Common myeloid progenitor, CD34-positive (primary cell): ENCODE measurements at regions of chr10 and their contacts with region 1.

Region 1: DNA sequence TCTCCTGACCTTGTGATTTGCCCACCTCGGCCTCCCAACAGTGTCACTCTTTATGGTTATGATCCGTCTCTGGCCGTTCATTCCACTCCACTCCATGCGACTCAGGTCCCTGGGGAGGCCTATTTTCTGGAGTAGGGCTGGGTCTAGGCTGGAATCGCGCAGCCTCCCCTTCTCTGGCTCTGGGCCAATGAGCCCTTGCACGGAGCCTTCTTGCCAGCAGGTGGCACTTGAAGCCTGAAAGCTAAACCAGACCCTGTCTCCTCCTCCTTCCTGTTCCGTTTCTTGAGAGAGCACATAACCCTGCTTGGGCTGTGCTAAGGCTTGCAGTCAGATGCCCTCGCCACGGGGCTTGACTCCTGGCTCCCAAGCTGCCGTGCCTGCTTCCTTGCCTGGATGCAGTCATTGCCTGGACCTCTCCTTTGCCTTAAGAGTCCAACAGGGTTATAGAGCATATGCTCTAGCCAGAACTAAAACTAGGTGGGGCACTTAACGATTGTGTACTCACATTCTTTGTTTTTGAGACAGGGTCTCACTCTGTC is 9.6 kb upstream of the DNAJB12 start:
- DNase-seq: peak; percentile 88 to 94 (median 92)
- H3K4me3 ChIP-seq: peak overlapping the region in 2 of 7 experiments; percentile 55 to 61
- H3K27ac ChIP-seq: no peak overlapping the region
- H3K4me1 ChIP-seq: peaks cover 0 to 9% (median 7%) of the 10 kb centered on the region in 4 experiments
- H3K27me3 ChIP-seq: no peaks in the 10 kb centered on the region

Region 2: GRCh38 chr10:72319416-72320254 is 44.7 kb before region 1 on chr10:
- CTCF ChIA-PET with region 1: no interaction called
- POLR2A ChIA-PET with region 1: no interaction called
- DNase-seq: peak; percentile 88 to 94 (median 93)
- H3K4me3 ChIP-seq: peak overlapping the region in 5 of 7 experiments; percentile 40 to 71 (median 50)
- H3K27ac ChIP-seq: peak overlapping the region; percentile 78 to 94
- H3K4me1 ChIP-seq: peaks cover 22 to 94% (median 92%) of the 10 kb centered on the region in 4 experiments
- H3K27me3 ChIP-seq: no peaks in the 10 kb centered on the region

Region 3: DNA sequence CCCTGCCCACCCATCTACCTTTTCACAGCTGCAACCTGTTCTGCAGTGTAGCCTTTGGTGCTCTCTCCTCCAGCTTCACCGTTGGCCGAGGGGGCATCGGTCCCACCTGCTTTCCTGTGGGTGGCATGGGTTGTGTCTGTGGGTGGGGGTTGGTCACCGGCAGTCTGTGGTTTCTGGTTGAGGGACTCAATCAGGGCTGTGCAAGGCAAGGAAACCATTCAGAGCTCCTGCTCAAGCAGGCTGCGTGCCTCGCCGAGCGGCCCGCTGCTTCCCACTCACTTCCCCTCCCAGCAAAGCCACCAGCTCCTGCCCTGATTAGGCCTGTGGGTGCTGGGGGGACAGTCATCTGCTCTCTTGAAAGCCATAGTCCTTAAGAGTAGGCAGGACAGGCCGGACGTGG is 19.4 kb before region 1 on chr10:
- CTCF ChIA-PET with region 1: interaction called, 13 read pairs
- POLR2A ChIA-PET with region 1: no interaction called
- DNase-seq: peak in 1 of 3 donors; percentile 43
- H3K4me3 ChIP-seq: no peak overlapping the region
- H3K27ac ChIP-seq: no peak overlapping the region
- H3K4me1 ChIP-seq: peaks cover 0 to 18% (median 11%) of the 10 kb centered on the region in 4 experiments
- H3K27me3 ChIP-seq: no peaks in the 10 kb centered on the region

Region 4: GRCh38 chr10:72375585-72375984 is 11.3 kb after region 1 on chr10:
- CTCF ChIA-PET with region 1: interaction called, 12 read pairs
- POLR2A ChIA-PET with region 1: no interaction called
- DNase-seq: no peak
- H3K4me3 ChIP-seq: no peak overlapping the region
- H3K27ac ChIP-seq: no peak overlapping the region
- H3K4me1 ChIP-seq: peaks cover 0 to 9% (median 0%) of the 10 kb centered on the region in 4 experiments
- H3K27me3 ChIP-seq: no peaks in the 10 kb centered on the region

Region 5: GRCh38 chr10:72834183-72834825 is 470.0 kb after region 1 on chr10:
- CTCF ChIA-PET with region 1: interaction called, 67 read pairs
- POLR2A ChIA-PET with region 1: interaction called, 4 read pairs
- DNase-seq: peak; percentile 72 to 86 (median 79)
- H3K4me3 ChIP-seq: no peak overlapping the region
- H3K27ac ChIP-seq: no peak overlapping the region
- H3K4me1 ChIP-seq: no peaks in the 10 kb centered on the region
- H3K27me3 ChIP-seq: no peaks in the 10 kb centered on the region

Region 6: GRCh38 chr10:73065441-73065840 is 701.1 kb after region 1 on chr10:
- CTCF ChIA-PET with region 1: interaction called, 11 read pairs
- POLR2A ChIA-PET with region 1: no interaction called
- DNase-seq: no peak
- H3K4me3 ChIP-seq: no peak overlapping the region
- H3K27ac ChIP-seq: no peak overlapping the region
- H3K4me1 ChIP-seq: no peaks in the 10 kb centered on the region
- H3K27me3 ChIP-seq: no peaks in the 10 kb centered on the region